ENCODE measurements at regions of chr13 and their contacts with region 1.

Region 1: DNA sequence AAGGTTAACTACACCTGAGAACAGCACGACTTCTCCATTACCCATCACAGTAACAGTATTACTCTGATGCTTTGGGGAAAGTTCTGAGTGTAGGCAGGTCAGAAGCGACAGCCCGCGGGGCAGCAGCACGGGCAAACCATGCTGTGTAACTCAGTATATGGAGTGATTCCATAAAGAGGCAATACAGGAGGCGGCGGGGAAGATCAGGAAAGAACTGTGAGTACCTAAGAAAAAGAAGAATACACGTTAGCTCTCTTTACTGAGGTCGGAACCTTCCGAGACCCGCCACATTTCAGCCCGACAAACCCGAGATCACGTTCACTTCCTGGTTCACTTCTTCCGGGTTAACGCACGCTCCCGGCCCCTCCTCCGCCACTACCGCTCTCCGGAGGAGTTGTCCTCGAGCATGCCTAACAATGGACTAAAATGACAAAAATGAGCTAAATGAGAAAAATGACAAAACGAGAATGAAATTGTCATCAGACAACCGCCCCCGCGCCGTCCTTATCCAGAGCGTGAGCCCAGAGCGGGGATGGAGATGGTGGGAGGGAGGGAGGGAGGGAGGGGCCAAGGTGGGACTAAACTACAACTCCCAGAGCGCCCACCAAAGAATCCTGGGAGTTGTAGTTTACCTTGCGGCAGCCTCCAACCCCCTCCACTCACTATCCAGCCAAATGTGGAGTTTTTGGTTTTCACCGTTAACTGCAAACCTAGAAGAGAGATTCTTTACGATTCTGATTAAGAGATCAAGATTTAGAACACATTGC is at the start of gene MTRF1:
- DNase-seq: peak; percentile 65 to 76 (median 71)
- H3K4me3 ChIP-seq: peak within 1 kb of the TSS; percentile 55 to 98 (median 97)
- H3K4me3 Mint-ChIP-seq: peak within 1 kb of the TSS; percentile 92 to 97
- H3K27ac ChIP-seq: peak within 1 kb of the TSS; percentile 59 to 95
- H3K27ac Mint-ChIP-seq: peak within 1 kb of the TSS; percentile 91 to 99 (median 96)
- H3K4me1 ChIP-seq: peaks cover 6 to 8% of the 10 kb centered on the region in 2 donors
- H3K4me1 Mint-ChIP-seq: peaks cover 15% of the 10 kb centered on the region
- H3K27me3 ChIP-seq: no peaks in the 10 kb centered on the region
- H3K27me3 Mint-ChIP-seq: peaks cover 0 to 4% (median 0%) of the 10 kb centered on the region in 3 donors
- CTCF ChIP-seq: no peak
- polyA plus RNA-seq, gene MTRF1: 4.0 to 17.2 (median 6.0) TPM

Region 2: DNA sequence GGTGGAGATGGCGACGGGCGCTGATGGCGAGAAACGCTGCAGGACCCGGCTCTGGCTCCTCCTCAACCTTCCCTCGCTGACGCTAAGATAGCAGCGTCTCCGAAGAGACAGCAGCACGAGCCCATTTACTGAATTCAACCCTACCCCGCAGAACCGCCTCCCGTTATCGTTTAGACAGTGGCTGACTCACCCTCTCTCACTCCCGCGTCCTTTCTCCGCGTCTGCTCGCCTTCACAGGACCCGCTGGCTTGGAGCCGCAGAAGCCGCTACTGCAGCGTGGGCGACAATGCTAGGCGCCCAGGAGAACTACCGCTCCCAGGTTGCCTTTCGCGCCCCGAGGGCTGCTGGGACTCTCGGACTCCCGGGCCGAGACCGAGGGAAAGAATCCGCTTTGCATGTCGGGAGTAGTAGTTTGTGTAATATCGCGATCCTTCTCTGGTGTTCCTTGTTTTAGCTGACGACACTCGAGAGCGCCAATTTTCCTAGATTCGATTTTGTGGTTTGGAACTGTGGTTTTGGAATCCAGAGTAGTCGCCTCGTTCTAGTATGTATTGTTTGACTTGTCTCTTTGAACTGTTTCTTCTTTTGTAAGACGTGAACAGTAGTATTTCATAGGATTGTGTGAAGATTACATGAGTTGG is 130.8 kb before region 1 on chr13 and contains the start of gene KBTBD6:
- intact Hi-C with region 1: loop called in 1 of 2 experiments (anchors 5 kb)
- DNase-seq: peak; percentile 92 to 96 (median 94)
- H3K4me3 ChIP-seq: peak within 1 kb of the TSS; percentile 60 to 82 (median 65)
- H3K4me3 Mint-ChIP-seq: peak within 1 kb of the TSS; percentile 97 to 99
- H3K27ac ChIP-seq: peak within 1 kb of the TSS; percentile 51 to 87
- H3K27ac Mint-ChIP-seq: peak within 1 kb of the TSS; percentile 84 to 91 (median 89)
- H3K4me1 ChIP-seq: peaks cover 12 to 28% of the 10 kb centered on the region in 2 donors
- H3K4me1 Mint-ChIP-seq: peaks cover 37% of the 10 kb centered on the region
- H3K27me3 ChIP-seq: no peaks in the 10 kb centered on the region
- H3K27me3 Mint-ChIP-seq: no peaks in the 10 kb centered on the region
- CTCF ChIP-seq: no peak
- polyA plus RNA-seq, gene KBTBD6: 0.37 to 1.2 (median 0.54) TPM

Region 3: GRCh38 chr13:41193919-41194824 is 69.3 kb before region 1 on chr13 and contains the start of gene KBTBD7:
- intact Hi-C with region 1: loop called in 1 of 2 experiments (anchors 10 kb)
- DNase-seq: peak; percentile 86 to 89 (median 87)
- H3K4me3 ChIP-seq: peak within 1 kb of the TSS; percentile 59 to 94 (median 80)
- H3K4me3 Mint-ChIP-seq: peak within 1 kb of the TSS; percentile 90 to 96
- H3K27ac ChIP-seq: peak within 1 kb of the TSS; percentile 90 to 93
- H3K27ac Mint-ChIP-seq: peak within 1 kb of the TSS; percentile 93 to 97 (median 96)
- H3K4me1 ChIP-seq: peaks cover 11% of the 10 kb centered on the region in 2 donors
- H3K4me1 Mint-ChIP-seq: peaks cover 31% of the 10 kb centered on the region
- H3K27me3 ChIP-seq: no peaks in the 10 kb centered on the region
- H3K27me3 Mint-ChIP-seq: peaks cover 2% of the 10 kb centered on the region in 3 donors
- CTCF ChIP-seq: no peak
- polyA plus RNA-seq, gene KBTBD7: 0.43 to 7.7 (median 5.5) TPM

Region 4: GRCh38 chr13:41310963-41311606 is 47.6 kb after region 1 on chr13 and contains the start of gene NAA16:
- intact Hi-C with region 1: loop called (anchors 5 to 10 kb)
- DNase-seq: peak; percentile 81 to 90 (median 90)
- H3K4me3 ChIP-seq: peak within 1 kb of the TSS; percentile 72 to 94 (median 80)
- H3K4me3 Mint-ChIP-seq: peak within 1 kb of the TSS; percentile 94 to 96
- H3K27ac ChIP-seq: peak within 1 kb of the TSS; percentile 87 to 98
- H3K27ac Mint-ChIP-seq: peak within 1 kb of the TSS; percentile 87 to 97 (median 94)
- H3K4me1 ChIP-seq: peaks cover 24 to 46% of the 10 kb centered on the region in 2 donors
- H3K4me1 Mint-ChIP-seq: peaks cover 35% of the 10 kb centered on the region
- H3K27me3 ChIP-seq: no peaks in the 10 kb centered on the region
- H3K27me3 Mint-ChIP-seq: peaks cover 0 to 2% (median 1%) of the 10 kb centered on the region in 3 donors
- CTCF ChIP-seq: peak; percentile 19
- polyA plus RNA-seq, gene NAA16: 3.8 to 20.6 (median 5.9) TPM

Region 5: GRCh38 chr13:41332829-41333228 is 69.4 kb after region 1 on chr13:
- intact Hi-C with region 1: no loop called
- DNase-seq: no peak
- H3K4me3 ChIP-seq: no peak overlapping the region
- H3K4me3 Mint-ChIP-seq: no peak overlapping the region
- H3K27ac ChIP-seq: no peak overlapping the region
- H3K27ac Mint-ChIP-seq: peak overlapping the region in 1 of 7 donors; percentile 7
- H3K4me1 ChIP-seq: peaks cover 6 to 11% of the 10 kb centered on the region in 2 donors
- H3K4me1 Mint-ChIP-seq: peaks cover 12% of the 10 kb centered on the region
- H3K27me3 ChIP-seq: no peaks in the 10 kb centered on the region
- H3K27me3 Mint-ChIP-seq: no peaks in the 10 kb centered on the region
- CTCF ChIP-seq: no peak

Measured in CD14-positive monocyte (primary cell).